GM12878 (cell line): ENCODE measurements at regions of chr19 and their contacts with region 1.

Region 1: DNA sequence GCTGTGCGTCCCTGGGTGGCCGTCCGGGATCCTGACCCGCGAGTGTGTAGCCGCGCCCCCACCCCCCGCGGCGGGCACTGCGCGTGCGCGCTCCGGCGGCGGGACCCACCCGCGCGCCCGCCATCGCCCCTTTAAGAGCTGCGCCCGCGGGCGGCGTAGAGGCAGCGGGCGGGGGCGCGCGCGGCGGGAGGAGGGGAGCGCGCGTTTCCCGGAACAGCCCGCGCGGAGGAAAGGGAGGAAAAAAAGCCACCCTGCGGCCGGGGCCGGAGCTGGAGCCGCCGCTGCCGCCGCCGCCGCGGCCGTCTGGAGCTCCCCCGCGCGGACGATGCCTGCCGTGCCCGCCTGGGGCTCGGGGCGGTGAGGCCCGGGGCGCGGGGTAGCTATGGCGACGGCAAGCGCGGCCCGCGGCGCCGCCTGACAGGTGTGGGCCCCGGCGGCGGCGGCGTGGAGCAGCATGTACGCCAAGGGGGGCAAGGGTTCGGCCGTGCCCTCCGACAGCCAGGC is at the start of gene SSBP4:
- DNase-seq: no peak
- ATAC-seq: peak; percentile 37
- H3K4me3 ChIP-seq: peak within 1 kb of the TSS; percentile 87
- H3K27ac ChIP-seq: peak within 1 kb of the TSS; percentile 72
- H3K4me1 ChIP-seq: peaks cover 70% of the 10 kb centered on the region
- H3K27me3 ChIP-seq: no peaks in the 10 kb centered on the region
- CTCF ChIP-seq: peak in 2 of 3 experiments; percentile 14 to 34; a peak in 2 of 6 replicates
- EP300 ChIP-seq: peak in 1 of 2 experiments; percentile 36; a peak in 1 of 4 replicates
- POLR2A ChIP-seq: no peak
- RAD21 ChIP-seq: no peak
- polyA plus RNA-seq, gene SSBP4: 0.37 to 6.6 TPM

Region 2: GRCh38 chr19:18097217-18097992 is 321.8 kb before region 1 on chr19 and contains the start of gene MAST3:
- CTCF ChIA-PET with region 1: no interaction called
- POLR2A ChIA-PET with region 1: no interaction called
- RAD21 ChIA-PET with region 1: no interaction called
- SMC1A ChIA-PET with region 1: no interaction called
- in situ Hi-C with region 1: no loop called
- intact Hi-C with region 1: no loop called
- DNase-seq: peak; percentile 64
- ATAC-seq: peak; percentile 85
- H3K4me3 ChIP-seq: peak within 1 kb of the TSS; percentile 96
- H3K27ac ChIP-seq: peak within 1 kb of the TSS; percentile 87
- H3K4me1 ChIP-seq: peaks cover 11% of the 10 kb centered on the region
- H3K27me3 ChIP-seq: no peaks in the 10 kb centered on the region
- CTCF ChIP-seq: no peak
- EP300 ChIP-seq: no peak
- POLR2A ChIP-seq: peak; percentile 78
- RAD21 ChIP-seq: no peak
- polyA plus RNA-seq, gene MAST3: 3.5 to 8.5 TPM

Region 3: DNA sequence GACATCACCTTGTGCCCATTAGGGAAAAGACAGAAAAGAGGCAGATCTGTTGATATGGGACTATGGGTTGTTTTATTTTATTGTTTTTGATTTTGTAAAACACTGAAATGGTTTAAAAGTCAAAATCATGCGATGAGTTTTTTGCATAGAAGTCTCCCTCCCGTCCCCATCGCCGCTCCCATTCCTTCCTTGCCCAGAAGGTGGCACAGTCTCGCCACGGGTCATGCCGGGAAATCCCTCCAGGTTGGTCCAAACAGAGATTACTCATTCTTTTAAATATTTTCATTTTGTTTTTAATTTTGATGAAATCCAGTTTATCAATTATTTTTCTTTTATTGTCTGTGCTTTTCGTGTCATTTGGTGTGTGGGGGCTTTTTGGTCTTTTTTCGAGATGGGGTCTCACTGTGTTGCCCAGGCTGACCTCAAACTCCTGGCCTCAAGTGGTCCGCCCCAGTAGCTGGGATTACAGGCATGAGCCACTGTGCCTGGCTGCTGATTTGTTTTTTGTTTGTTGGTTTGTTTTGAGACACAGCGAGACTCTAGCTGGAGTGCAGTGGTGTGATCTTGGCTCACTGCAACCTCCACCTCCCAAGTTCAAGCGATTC is 69.6 kb before region 1 on chr19:
- CTCF ChIA-PET with region 1: interaction called, 75 read pairs
- POLR2A ChIA-PET with region 1: no interaction called
- RAD21 ChIA-PET with region 1: interaction called, 3 read pairs
- SMC1A ChIA-PET with region 1: interaction called, 5 read pairs
- in situ Hi-C with region 1: no loop called
- intact Hi-C with region 1: no loop called
- DNase-seq: no peak
- ATAC-seq: peak; percentile 80
- H3K4me3 ChIP-seq: no peak overlapping the region
- H3K27ac ChIP-seq: no peak overlapping the region
- H3K4me1 ChIP-seq: no peaks in the 10 kb centered on the region
- H3K27me3 ChIP-seq: no peaks in the 10 kb centered on the region
- CTCF ChIP-seq: peak; percentile 74 to 93 (median 80)
- EP300 ChIP-seq: no peak
- POLR2A ChIP-seq: no peak
- RAD21 ChIP-seq: peak; percentile 88

Region 4: GRCh38 chr19:18478569-18479311 is 59.5 kb after region 1 on chr19:
- CTCF ChIA-PET with region 1: no interaction called
- POLR2A ChIA-PET with region 1: no interaction called
- RAD21 ChIA-PET with region 1: no interaction called
- SMC1A ChIA-PET with region 1: no interaction called
- in situ Hi-C with region 1: no loop called
- intact Hi-C with region 1: no loop called
- DNase-seq: peak; percentile 51
- ATAC-seq: peak; percentile 96
- H3K4me3 ChIP-seq: no peak overlapping the region
- H3K27ac ChIP-seq: peak overlapping the region; percentile 89
- H3K4me1 ChIP-seq: peaks cover 33% of the 10 kb centered on the region
- H3K27me3 ChIP-seq: no peaks in the 10 kb centered on the region
- CTCF ChIP-seq: no peak
- EP300 ChIP-seq: no peak
- POLR2A ChIP-seq: peak; percentile 57
- RAD21 ChIP-seq: no peak